MCF 10A (cell line): ENCODE measurements at regions of chr2 and their contacts with region 1.

Region 1: DNA sequence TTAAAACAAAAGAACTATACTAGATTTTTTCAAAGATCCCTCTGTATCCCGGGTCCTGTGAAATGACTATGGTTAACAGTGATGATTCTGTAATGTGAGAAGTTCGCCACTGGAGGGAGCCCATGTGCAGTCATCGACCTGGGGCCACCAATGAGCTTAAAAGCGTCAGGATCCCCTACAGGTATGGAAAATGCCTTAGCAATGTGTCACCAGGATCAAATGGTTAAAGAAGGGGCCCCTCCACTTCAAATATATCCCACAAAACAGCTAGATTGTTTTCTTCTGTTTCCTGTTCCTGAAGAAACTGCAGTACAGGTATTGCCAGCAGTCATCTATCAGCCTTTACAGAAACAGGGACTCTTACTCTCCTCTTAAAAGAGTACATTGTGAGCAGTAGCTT is 15.3 kb downstream of the CHRNA1 start:
- DNase-seq: peak; percentile 81
- H3K4me3 Mint-ChIP-seq: no peak overlapping the region
- H3K27ac Mint-ChIP-seq: no peak overlapping the region
- H3K4me1 Mint-ChIP-seq: peaks cover 5% of the 10 kb centered on the region
- H3K27me3 Mint-ChIP-seq: no peaks in the 10 kb centered on the region
- CTCF ChIP-seq: peak; percentile 67

Region 2: GRCh38 chr2:174738841-174739240 is 10.1 kb before region 1 on chr2:
- CTCF ChIA-PET with region 1: interaction called, 29 read pairs
- POLR2A ChIA-PET with region 1: no interaction called
- intact Hi-C with region 1: no loop called
- DNase-seq: no peak
- H3K4me3 Mint-ChIP-seq: no peak overlapping the region
- H3K27ac Mint-ChIP-seq: no peak overlapping the region
- H3K4me1 Mint-ChIP-seq: no peaks in the 10 kb centered on the region
- H3K27me3 Mint-ChIP-seq: peaks cover 12% of the 10 kb centered on the region
- CTCF ChIP-seq: no peak

Region 3: GRCh38 chr2:174764280-174765255 is 15.6 kb after region 1 on chr2 and contains the start of gene CHRNA1:
- CTCF ChIA-PET with region 1: interaction called, 19 read pairs
- POLR2A ChIA-PET with region 1: interaction called, 3 read pairs
- intact Hi-C with region 1: no loop called
- DNase-seq: no peak
- H3K4me3 Mint-ChIP-seq: no peak within 1 kb of the TSS
- H3K27ac Mint-ChIP-seq: no peak within 1 kb of the TSS
- H3K4me1 Mint-ChIP-seq: no peaks in the 10 kb centered on the region
- H3K27me3 Mint-ChIP-seq: no peaks in the 10 kb centered on the region
- CTCF ChIP-seq: no peak
- total RNA-seq, gene CHRNA1: not detected in 2 replicates